ENCODE measurements at regions of chr15 and their contacts with region 1.

Region 1: DNA sequence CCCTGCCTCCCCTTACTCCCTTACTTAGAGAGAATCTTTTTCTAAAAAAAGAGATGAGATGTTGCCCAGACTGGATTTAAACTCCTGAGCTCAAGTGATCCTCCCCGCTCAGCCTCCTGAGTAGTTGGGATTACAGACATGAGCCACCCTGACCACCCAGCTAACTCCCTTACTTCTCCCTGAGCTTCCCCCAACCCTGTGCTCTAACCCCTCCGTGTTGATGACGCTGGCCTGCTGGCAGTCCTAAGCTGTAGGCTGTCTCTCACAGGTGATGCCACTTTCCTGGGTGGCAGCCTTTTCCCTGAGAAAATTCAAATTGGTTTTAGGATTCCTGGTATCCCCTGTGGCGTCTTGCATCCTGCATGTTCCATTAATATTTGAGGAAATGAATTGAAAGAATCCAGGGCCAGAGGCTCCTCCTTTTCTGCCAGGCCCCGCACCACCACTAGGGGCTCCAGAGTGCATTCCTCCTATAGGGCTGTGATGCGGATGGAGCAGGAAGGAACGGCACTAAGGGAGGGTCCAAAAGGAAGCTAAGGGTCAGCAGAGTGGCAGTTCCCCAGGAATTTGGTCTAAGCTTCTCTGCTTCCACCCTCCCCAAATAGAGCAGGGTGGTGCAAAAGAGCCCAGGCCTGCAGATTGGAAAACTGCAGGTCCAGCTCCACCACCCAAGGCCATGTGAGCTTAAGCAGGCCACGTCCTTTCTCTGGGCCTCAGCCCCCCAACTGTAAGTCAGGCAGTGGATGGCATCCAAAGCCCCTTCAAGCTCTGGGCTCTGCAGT is 101.1 kb downstream of the DAPK2 start:
- DNase-seq: peak; percentile 82
- ATAC-seq: peak; percentile 97
- H3K4me3 Mint-ChIP-seq: no peak overlapping the region
- H3K27ac Mint-ChIP-seq: no peak overlapping the region
- H3K4me1 Mint-ChIP-seq: peaks cover 2% of the 10 kb centered on the region
- H3K27me3 Mint-ChIP-seq: no peaks in the 10 kb centered on the region
- CTCF ChIP-seq: peak; percentile 87

Region 2: GRCh38 chr15:63600616-63601025 is 344.6 kb before region 1 on chr15:
- CTCF ChIA-PET with region 1: interaction called, 12 read pairs
- POLR2A ChIA-PET with region 1: no interaction called
- DNase-seq: peak; percentile 67
- ATAC-seq: peak; percentile 60
- H3K4me3 Mint-ChIP-seq: peak overlapping the region; percentile 83
- H3K27ac Mint-ChIP-seq: no peak overlapping the region
- H3K4me1 Mint-ChIP-seq: peaks cover 21% of the 10 kb centered on the region
- H3K27me3 Mint-ChIP-seq: peaks cover 28% of the 10 kb centered on the region
- CTCF ChIP-seq: no peak

Region 3: DNA sequence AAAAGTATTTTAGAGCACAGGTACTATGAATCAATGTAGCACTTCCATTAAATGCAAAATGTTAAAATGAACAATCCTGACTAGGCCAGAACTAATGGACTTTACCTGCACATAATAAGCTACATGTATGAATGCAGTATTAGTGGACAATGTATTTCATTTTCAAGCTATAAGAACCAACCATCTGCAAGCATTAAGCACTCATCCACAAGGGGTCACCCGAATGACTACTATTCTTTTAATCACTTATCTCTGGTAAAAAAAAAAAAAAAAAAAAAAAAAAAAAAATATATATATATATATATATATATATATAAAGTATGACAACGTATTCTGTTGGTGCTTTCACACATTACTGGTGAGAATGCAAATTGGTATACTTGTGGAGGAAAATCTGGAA is 118.7 kb before region 1 on chr15:
- CTCF ChIA-PET with region 1: no interaction called
- POLR2A ChIA-PET with region 1: no interaction called
- DNase-seq: no peak
- ATAC-seq: no peak
- H3K4me3 Mint-ChIP-seq: no peak overlapping the region
- H3K27ac Mint-ChIP-seq: no peak overlapping the region
- H3K4me1 Mint-ChIP-seq: peaks cover 5% of the 10 kb centered on the region
- H3K27me3 Mint-ChIP-seq: no peaks in the 10 kb centered on the region
- CTCF ChIP-seq: no peak

Region 4: GRCh38 chr15:63896336-63897115 is 48.7 kb before region 1 on chr15:
- CTCF ChIA-PET with region 1: interaction called, 18 read pairs
- POLR2A ChIA-PET with region 1: no interaction called
- DNase-seq: no peak
- ATAC-seq: no peak; the same call in 1 of the 2 replicates
- H3K4me3 Mint-ChIP-seq: no peak overlapping the region
- H3K27ac Mint-ChIP-seq: no peak overlapping the region
- H3K4me1 Mint-ChIP-seq: peaks cover 15% of the 10 kb centered on the region
- H3K27me3 Mint-ChIP-seq: no peaks in the 10 kb centered on the region
- CTCF ChIP-seq: no peak

Region 5: DNA sequence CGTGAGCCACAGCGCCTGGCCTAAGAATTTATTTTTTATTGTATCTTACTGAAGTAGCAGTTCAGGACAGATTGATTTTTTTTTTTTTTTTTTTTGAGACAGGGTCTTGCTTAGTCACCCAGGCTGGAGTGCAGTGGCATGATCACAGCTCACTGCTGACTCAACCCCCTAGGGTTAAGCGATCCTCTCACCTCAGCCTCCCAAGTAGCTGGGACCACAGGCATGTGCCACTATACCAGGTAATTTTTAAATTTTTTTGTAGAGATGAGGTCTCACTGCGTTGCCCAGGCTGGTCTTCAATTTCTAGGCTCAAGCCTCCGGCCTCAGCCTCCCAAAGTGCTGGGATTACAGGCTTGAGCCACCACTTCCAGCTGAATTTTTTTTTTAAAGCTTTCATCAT is 11.7 kb before region 1 on chr15:
- CTCF ChIA-PET with region 1: interaction called, 20 read pairs
- POLR2A ChIA-PET with region 1: interaction called, 7 read pairs
- DNase-seq: no peak
- ATAC-seq: no peak
- H3K4me3 Mint-ChIP-seq: no peak overlapping the region
- H3K27ac Mint-ChIP-seq: no peak overlapping the region
- H3K4me1 Mint-ChIP-seq: no peaks in the 10 kb centered on the region
- H3K27me3 Mint-ChIP-seq: no peaks in the 10 kb centered on the region
- CTCF ChIP-seq: no peak

Region 6: GRCh38 chr15:64024172-64025050 is 79.2 kb after region 1 on chr15:
- CTCF ChIA-PET with region 1: interaction called, 15 read pairs
- POLR2A ChIA-PET with region 1: no interaction called
- DNase-seq: peak; percentile 29
- ATAC-seq: peak; percentile 73
- H3K4me3 Mint-ChIP-seq: no peak overlapping the region
- H3K27ac Mint-ChIP-seq: no peak overlapping the region
- H3K4me1 Mint-ChIP-seq: peaks cover 16% of the 10 kb centered on the region
- H3K27me3 Mint-ChIP-seq: no peaks in the 10 kb centered on the region
- CTCF ChIP-seq: no peak

Region 7: GRCh38 chr15:64052925-64053491 is 107.8 kb after region 1 on chr15:
- CTCF ChIA-PET with region 1: interaction called, 26 read pairs
- POLR2A ChIA-PET with region 1: no interaction called
- DNase-seq: no peak
- ATAC-seq: no peak
- H3K4me3 Mint-ChIP-seq: no peak overlapping the region
- H3K27ac Mint-ChIP-seq: no peak overlapping the region
- H3K4me1 Mint-ChIP-seq: peaks cover 3% of the 10 kb centered on the region
- H3K27me3 Mint-ChIP-seq: peaks cover 12% of the 10 kb centered on the region
- CTCF ChIP-seq: no peak

Measured in WTC11 (cell line).